ENCODE measurements at regions of chr6 and their contacts with region 1.

Region 1: DNA sequence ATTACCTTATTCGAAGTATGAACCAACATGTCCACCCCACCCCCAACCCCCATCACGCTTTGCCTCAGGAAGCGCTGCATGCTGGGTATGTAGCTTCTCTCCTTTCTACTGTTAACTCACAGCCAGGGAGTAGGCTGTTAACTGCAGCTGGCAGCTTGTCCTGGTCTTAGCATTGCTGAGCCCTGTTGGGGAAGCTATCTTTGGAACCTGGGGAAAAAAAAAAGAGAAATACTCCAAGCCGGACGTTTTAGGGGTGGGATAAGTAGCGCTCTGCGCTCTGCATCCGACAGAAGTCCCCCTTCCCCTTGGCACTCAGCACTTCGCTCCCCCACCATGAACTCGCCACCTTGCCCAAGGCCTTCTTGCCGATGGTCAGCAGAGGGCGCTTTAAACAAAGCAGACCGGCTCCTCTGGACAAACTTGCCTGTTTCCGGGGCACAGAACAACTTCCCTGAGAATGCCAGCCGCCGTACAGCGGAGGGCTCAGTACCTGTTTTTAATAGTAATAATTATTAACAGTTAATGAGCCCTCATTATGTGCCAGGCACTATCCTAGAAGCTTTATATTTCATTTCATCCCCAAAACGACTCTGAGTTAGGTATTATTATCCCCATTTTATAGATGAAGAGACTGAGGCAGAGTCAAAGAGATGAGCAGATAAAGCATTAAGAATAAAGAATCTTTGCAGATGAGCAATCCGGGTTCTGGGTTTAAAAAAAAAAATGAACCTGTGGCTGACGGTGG is 35.2 kb upstream of the MDFI start:
- DNase-seq: no peak
- H3K4me3 ChIP-seq: no peak overlapping the region
- H3K27me3 ChIP-seq: no peaks in the 10 kb centered on the region
- CTCF ChIP-seq: peak; percentile 94

Region 2: GRCh38 chr6:41122373-41122772 is 480.7 kb before region 1 on chr6:
- CTCF ChIA-PET with region 1: no interaction called
- POLR2A ChIA-PET with region 1: no interaction called
- DNase-seq: no peak
- H3K4me3 ChIP-seq: no peak overlapping the region
- H3K27me3 ChIP-seq: no peaks in the 10 kb centered on the region
- CTCF ChIP-seq: no peak

Region 3: DNA sequence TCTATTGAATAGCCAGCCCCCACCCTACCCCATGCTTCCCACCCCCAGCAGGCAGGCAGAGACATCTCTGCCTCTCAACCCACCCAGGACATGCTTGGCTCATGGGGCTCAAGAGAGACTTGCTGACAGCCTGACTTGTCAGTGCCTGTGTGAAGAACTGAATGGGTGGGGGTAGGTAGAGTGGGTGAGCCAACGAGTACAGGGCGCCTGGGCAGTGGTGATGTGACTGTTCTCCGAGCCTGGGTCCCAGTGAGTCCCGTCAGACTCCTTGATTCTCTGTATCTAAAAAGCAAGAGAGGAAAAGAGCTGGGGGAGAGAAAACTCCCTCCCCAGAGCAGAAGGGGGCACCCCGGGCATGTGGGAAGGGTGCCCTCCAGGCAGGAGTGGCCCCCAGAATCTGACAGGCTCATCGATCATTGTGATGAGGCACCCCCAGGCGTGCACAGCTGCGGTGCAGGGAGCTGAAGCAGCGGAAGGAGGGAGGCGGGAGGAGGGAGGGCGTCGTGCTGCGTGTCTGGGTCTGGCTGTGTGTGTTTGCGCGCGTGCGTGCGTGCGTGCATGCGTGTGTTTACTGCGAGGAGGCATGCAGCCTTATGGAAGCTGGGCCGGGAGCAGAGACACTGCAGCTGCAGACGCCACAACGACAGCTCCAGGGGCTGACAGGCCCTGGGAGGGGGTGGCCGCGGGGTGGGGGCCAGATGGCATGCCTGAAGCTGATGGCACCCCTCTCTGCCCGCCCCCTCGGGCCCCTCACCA is 16.6 kb before region 1 on chr6:
- CTCF ChIA-PET with region 1: no interaction called
- POLR2A ChIA-PET with region 1: no interaction called
- DNase-seq: no peak
- H3K4me3 ChIP-seq: no peak overlapping the region
- H3K27me3 ChIP-seq: no peaks in the 10 kb centered on the region
- CTCF ChIP-seq: no peak

Region 4: DNA sequence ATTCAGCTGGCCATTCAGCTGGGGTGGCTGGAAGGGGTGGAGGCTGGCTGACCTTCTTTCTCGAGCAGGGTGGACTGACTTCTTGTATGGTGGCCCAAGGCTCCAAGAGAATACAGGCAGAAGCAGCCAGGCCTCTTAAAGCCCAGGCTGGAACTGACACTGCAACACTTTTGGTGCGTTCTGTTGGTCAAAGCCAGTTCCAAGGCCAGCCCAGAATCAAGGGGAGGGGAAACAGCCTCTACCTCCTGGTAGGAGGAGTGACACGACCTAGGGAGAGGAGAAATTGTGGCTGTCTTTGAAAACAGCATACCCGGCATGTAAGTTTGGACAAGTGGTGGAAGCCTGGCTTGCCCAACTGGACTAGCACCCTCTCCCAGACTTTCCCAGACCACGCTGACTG is 15.1 kb after region 1 on chr6:
- CTCF ChIA-PET with region 1: interaction called, 15 read pairs
- POLR2A ChIA-PET with region 1: no interaction called
- DNase-seq: no peak
- H3K4me3 ChIP-seq: no peak overlapping the region
- H3K27me3 ChIP-seq: peaks cover 17% of the 10 kb centered on the region
- CTCF ChIP-seq: no peak

Region 5: GRCh38 chr6:41630946-41631345 is 27.9 kb after region 1 on chr6:
- CTCF ChIA-PET with region 1: interaction called, 4 read pairs
- POLR2A ChIA-PET with region 1: interaction called, 26 read pairs
- DNase-seq: no peak
- H3K4me3 ChIP-seq: no peak overlapping the region
- H3K27me3 ChIP-seq: peaks cover 6% of the 10 kb centered on the region
- CTCF ChIP-seq: no peak

Region 6: DNA sequence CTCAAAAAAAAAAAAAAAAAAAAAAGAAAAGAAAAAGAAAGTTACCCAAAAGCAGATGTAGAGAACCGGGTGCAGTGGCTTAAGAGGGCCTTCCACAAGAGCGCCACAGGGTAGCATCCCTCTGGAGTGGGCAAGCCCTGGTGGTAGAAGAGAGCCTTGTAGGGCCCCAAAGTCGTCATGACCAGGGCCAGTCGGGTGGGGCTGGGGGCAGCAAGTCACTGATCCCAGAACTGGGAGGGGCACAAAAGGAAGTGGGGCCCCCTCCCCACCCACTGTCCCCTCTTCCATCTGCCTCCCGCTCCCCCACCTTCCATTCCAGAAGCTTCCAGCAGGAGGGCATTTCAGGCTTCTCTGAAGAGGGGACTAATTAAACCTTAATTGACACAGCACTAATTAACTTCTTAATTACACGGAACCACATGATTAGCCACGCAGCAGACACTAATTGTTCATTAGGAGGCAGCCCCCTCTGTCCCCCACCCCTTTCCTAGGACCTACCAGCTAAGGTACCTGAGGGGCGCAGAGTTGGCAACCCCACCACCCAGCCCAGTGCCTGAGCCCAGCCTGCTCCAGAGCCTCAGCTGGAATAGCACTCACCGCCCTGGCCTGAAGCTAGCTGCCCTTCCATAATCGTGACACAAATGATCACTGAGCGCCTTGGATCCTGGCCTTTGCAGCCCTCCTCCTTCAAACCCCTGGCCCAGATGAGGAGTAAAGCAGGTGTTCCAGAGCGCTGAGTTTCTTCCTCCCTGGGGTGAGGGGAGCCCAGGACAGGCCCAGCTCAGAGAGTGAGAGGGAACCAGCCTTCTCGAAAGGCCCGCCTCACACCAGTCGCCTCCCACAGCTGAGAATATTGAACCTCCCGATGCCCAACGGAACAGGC is 70.0 kb after region 1 on chr6:
- CTCF ChIA-PET with region 1: no interaction called
- POLR2A ChIA-PET with region 1: no interaction called
- DNase-seq: no peak
- H3K4me3 ChIP-seq: no peak overlapping the region
- H3K27me3 ChIP-seq: peaks cover 4% of the 10 kb centered on the region
- CTCF ChIP-seq: no peak

Region 7: GRCh38 chr6:41824571-41825569 is 221.8 kb after region 1 on chr6:
- CTCF ChIA-PET with region 1: no interaction called
- POLR2A ChIA-PET with region 1: no interaction called
- DNase-seq: no peak
- H3K4me3 ChIP-seq: no peak overlapping the region
- H3K27me3 ChIP-seq: no peaks in the 10 kb centered on the region
- CTCF ChIP-seq: no peak